ENCODE measurements at regions of chr12 and their contacts with region 1.

Region 1: DNA sequence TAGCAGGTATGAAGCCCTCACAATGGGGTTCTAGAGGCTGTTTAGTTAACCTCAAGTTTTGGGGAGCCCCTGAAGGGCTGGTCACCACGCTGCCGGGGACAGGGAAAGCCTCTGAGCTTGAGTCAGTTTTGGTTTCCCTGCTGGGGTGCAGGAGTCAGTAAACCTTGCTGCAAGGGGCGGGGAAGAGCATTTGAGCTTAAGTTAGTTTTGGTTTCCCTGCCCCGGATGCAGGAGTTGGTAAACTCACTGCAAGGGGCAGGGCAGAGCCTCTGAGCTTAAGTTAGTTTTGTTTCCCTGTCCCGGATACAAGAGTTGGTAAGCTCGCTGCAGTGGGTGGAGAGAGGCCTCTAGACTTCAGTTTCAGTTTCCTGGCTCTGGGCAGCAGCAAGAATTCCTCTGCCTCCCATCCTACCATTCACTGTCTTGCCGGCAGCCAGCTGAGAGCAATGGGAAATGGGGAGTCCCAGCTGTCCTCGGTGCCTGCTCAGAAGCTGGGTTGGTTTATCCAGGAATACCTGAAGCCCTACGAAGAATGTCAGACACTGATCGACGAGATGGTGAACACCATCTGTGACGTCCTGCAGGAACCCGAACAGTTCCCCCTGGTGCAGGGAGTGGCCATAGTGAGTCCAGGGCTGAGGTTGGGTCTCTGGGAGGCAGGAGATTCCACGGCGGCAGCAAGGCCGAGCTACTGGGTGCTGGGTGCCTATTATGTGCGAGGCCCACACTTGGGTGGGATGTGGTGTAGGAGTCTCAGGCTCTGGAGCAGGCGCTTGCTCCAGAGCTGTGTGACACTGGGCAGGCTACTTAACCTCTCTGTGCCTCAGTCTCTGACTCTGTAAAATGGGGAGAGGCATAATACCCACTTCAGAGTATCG is at the start of gene OAS2:
- DNase-seq: peak; percentile 94
- ATAC-seq: peak; percentile 92
- H3K4me3 Mint-ChIP-seq: peak within 1 kb of the TSS; percentile 79
- H3K27ac Mint-ChIP-seq: peak within 1 kb of the TSS; percentile 100
- H3K4me1 Mint-ChIP-seq: peaks cover 51% of the 10 kb centered on the region
- H3K27me3 Mint-ChIP-seq: no peaks in the 10 kb centered on the region
- total RNA-seq, gene OAS2: 237 to 242 TPM

Region 2: DNA sequence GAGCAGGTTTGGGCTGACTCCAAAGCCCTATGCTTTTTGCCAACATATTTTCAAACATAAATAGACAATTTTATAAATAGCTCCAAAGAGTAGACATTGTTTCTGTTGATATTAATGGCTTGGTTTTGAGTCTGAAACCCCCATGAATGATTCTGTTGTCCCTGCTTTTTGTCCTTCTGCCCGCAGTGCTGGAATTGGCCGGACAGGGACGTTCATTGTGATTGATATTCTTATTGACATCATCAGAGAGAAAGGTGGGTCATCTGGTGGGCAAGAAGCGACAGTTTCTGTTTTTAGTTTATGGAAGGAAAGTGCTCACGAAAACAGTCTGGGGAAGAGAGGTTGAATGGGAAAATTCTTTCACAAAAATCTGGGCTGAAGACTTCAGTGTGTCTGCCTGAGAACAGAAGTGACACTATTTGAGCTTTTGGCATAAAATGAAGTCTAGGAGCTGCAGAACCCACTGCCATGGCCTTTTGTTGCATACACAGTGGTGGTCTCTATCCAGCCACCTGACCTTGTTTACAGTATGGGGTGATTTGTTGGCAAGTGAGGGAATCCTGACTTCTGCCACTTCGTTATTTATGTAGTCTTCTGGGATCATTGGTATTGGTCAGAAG is 490.0 kb before region 1 on chr12:
- CTCF ChIA-PET with region 1: no interaction called
- POLR2A ChIA-PET with region 1: no interaction called
- DNase-seq: no peak
- ATAC-seq: no peak
- H3K4me3 Mint-ChIP-seq: no peak overlapping the region
- H3K27ac Mint-ChIP-seq: no peak overlapping the region
- H3K4me1 Mint-ChIP-seq: no peaks in the 10 kb centered on the region
- H3K27me3 Mint-ChIP-seq: no peaks in the 10 kb centered on the region

Region 3: GRCh38 chr12:112900299-112901145 is 77.9 kb before region 1 on chr12:
- CTCF ChIA-PET with region 1: interaction called, 14 read pairs
- POLR2A ChIA-PET with region 1: interaction called, 104 read pairs
- DNase-seq: peak; percentile 63
- ATAC-seq: peak; percentile 55
- H3K4me3 Mint-ChIP-seq: no peak overlapping the region
- H3K27ac Mint-ChIP-seq: no peak overlapping the region
- H3K4me1 Mint-ChIP-seq: peaks cover 37% of the 10 kb centered on the region
- H3K27me3 Mint-ChIP-seq: peaks cover 17% of the 10 kb centered on the region

Region 4: DNA sequence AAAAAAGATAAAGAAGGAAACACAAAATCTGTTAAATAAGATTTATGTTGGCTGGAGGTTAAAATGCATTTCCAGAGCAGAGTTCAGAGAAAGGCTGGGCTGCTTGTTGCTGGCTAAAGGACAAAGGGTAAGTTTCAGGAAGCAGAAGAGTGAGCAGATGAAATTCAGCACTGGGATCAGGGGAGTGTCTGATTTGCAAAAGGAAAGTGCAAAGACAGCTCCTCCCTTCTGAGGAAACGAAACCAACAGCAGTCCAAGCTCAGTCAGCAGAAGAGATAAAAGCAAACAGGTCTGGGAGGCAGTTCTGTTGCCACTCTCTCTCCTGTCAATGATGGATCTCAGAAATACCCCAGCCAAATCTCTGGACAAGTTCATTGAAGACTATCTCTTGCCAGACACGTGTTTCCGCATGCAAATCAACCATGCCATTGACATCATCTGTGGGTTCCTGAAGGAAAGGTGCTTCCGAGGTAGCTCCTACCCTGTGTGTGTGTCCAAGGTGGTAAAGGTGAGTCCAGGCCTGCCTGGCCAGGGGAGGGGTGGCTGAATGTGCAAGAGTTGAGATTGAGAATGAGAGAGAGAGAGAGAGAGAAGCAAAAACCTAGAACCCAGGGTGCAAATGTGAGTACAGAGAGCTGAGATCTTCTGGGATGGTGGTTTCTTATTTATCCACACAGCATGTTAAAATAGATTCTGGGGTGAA is 71.5 kb before region 1 on chr12 and contains the start of gene OAS1:
- CTCF ChIA-PET with region 1: interaction called, 13 read pairs
- POLR2A ChIA-PET with region 1: interaction called, 104 read pairs
- DNase-seq: peak; percentile 74
- ATAC-seq: peak; percentile 88
- H3K4me3 Mint-ChIP-seq: peak within 1 kb of the TSS; percentile 95
- H3K27ac Mint-ChIP-seq: peak within 1 kb of the TSS; percentile 95
- H3K4me1 Mint-ChIP-seq: peaks cover 68% of the 10 kb centered on the region
- H3K27me3 Mint-ChIP-seq: no peaks in the 10 kb centered on the region
- total RNA-seq, gene OAS1: 143 to 146 TPM

Region 5: DNA sequence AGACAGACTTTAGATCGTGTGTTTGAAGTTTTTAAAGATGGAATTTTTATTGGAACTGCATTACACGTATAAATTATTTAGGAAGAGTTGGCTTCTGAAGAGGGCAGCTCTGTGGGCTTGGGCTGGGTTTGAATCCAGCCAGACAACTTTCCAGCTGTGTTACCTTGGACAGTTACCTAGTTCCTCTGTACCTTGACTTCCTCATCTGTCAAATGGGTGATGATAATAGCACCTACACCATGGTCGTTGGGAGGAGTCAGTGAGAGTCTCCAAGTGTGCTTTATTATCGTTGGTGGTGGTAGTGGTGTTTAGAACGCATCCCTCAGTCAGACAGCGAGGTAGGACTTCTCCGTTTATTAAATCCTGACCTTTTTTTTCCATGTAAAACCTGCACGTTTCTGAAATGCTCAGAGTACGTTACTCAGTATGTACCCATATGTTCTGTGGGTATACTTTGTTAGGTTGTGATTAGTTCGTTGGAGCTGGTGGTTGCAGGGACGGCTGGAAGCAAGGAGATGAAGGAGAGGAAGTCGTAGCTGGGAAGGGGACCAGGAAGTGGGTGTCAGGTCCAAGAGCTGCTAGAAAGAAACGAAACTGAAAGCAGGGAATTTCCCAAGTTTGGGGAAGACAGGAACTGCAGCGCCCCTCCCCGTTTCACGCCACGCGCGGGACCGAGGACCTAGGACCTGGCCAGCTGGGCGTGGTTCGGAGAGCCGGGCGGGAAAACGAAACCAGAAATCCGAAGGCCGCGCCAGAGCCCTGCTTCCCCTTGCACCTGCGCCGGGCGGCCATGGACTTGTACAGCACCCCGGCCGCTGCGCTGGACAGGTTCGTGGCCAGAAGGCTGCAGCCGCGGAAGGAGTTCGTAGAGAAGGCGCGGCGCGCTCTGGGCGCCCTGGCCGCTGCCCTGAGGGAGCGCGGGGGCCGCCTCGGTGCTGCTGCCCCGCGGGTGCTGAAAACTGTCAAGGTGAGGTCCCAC is 40.4 kb before region 1 on chr12 and contains the start of gene OAS3:
- CTCF ChIA-PET with region 1: interaction called, 7 read pairs
- POLR2A ChIA-PET with region 1: interaction called, 86 read pairs
- DNase-seq: peak; percentile 80
- ATAC-seq: peak; percentile 87
- H3K4me3 Mint-ChIP-seq: peak within 1 kb of the TSS; percentile 98
- H3K27ac Mint-ChIP-seq: peak within 1 kb of the TSS; percentile 95
- H3K4me1 Mint-ChIP-seq: peaks cover 40% of the 10 kb centered on the region
- H3K27me3 Mint-ChIP-seq: no peaks in the 10 kb centered on the region
- total RNA-seq, gene OAS3: 199 to 202 TPM

Region 6: DNA sequence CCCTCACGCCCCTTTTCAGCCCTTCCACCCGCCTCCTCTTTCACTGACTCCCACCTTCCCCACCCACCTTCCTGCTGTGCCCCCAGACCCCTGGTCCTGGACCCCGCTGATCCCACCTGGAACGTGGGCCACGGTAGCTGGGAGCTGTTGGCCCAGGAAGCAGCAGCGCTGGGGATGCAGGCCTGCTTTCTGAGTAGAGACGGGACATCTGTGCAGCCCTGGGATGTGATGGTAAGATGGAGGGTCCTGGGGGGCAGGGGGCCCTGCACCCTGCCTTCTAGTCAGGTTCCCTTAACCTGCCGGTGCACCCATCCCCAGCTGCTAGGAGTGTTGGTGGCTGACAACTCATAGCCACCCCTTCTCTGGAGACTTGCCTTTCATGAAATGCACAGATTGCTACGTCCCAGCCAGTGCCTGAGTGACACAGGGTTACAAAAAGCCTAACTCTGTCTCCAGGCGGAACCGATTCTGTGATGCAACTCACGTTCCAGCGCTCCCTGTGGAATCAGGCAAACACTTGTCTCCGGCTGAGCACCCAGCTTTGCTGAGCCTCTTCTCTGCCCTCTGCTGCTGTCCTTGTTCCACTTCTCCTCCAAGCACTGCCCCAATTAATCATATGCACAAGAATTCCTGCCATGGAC is 15.1 kb before region 1 on chr12:
- CTCF ChIA-PET with region 1: interaction called, 4 read pairs
- POLR2A ChIA-PET with region 1: interaction called, 15 read pairs
- DNase-seq: no peak
- ATAC-seq: no peak
- H3K4me3 Mint-ChIP-seq: no peak overlapping the region
- H3K27ac Mint-ChIP-seq: peak overlapping the region; percentile 2
- H3K4me1 Mint-ChIP-seq: peaks cover 23% of the 10 kb centered on the region
- H3K27me3 Mint-ChIP-seq: no peaks in the 10 kb centered on the region

Region 7: DNA sequence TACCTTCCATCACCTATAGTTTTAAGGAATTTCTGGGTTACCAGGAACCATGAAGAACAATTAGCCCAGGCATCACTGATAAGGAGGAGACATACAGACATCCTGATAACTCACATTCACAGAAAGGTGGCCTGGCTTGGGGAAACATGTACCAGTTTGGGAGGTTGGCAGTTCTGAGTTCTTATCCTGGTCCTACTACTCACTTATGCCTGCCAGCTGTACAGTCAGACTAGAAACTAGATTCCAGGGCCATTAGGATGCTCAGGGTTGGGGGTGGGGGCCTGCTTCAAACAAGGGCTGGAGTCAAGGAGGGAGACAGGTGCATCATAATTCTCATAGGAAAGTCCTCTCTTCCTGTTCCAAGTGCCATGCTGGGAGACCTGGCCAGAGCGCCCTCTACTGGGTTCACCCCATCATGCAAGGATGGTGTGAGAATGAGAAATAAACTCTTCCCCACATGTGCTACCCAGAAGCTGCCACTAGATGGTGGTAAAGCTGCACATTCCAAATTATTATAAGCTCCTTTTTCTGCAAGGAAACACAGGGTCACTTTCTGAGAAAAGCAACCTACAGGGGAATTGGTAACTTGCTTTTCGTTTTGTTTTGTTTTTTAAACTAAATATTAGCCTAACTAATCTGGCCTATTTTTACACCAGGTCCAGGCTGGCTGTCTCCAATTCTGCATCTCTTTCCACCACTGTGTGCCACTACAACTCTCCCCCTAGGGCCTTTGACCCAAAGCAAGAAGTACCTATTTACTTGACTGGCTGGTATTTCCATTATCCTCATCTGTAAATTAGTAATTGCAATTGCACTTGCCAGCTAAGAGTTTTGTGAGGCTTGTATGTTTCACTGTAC is 14.4 kb after region 1 on chr12:
- CTCF ChIA-PET with region 1: interaction called, 61 read pairs
- POLR2A ChIA-PET with region 1: interaction called, 104 read pairs
- DNase-seq: peak; percentile 70
- ATAC-seq: peak; percentile 45
- H3K4me3 Mint-ChIP-seq: no peak overlapping the region
- H3K27ac Mint-ChIP-seq: no peak overlapping the region
- H3K4me1 Mint-ChIP-seq: peaks cover 32% of the 10 kb centered on the region
- H3K27me3 Mint-ChIP-seq: no peaks in the 10 kb centered on the region

Region 8: DNA sequence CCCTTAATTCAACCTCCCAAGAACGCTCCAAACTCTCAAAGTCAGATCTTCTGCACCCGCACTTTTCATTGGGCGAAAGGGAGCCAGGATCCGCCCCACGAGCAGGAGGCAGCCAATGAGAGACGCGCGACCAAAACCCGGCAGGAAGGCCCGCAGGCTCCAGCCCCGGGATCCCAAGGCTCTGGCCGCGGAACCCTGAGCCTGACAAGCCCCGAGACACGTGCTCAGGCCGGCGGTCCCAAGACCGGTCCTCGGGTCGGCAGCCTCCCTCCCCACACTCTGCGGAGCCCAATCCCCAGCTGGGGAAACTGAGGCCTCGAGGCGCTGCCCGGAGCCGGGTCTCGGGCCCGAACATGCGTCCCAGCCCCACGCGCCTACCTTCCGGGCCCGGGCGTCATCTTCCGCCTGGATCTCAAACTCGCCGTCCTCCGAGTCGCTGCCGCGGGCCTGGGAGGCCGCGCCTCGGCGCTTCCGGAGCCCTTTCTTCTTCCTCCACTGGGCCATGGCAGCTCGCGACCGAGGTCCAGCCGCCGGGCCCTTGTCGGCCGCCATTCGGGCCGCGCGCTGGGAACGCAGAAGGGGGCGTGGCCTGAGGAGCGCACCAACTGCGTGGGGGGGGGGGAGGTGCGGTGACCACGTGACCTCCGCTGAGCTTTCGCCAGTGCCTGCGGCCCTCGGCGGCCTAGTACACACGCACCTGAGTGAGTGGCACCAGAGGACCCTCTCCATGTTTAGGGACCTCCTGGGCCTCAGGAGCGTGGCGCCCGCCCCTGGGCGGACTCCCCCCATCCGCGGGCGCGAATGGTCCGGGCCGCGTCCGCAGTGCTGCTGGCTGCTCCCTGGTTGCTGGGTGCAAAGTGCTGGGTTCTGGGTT is 206.7 kb after region 1 on chr12 and contains the starts of genes DDX54 and RITA1:
- CTCF ChIA-PET with region 1: no interaction called
- POLR2A ChIA-PET with region 1: interaction called, 10 read pairs
- DNase-seq: peak; percentile 93
- ATAC-seq: peak; percentile 92
- H3K4me3 Mint-ChIP-seq: peak within 1 kb of the TSS; percentile 97
- H3K27ac Mint-ChIP-seq: peak within 1 kb of the TSS; percentile 98
- H3K4me1 Mint-ChIP-seq: peaks cover 35% of the 10 kb centered on the region
- H3K27me3 Mint-ChIP-seq: no peaks in the 10 kb centered on the region
- total RNA-seq, gene DDX54: 79.4 to 82.0 TPM
- total RNA-seq, gene RITA1: 21.0 to 22.6 TPM